ENCODE measurements at regions of chr9 and their contacts with region 1.

Region 1: DNA sequence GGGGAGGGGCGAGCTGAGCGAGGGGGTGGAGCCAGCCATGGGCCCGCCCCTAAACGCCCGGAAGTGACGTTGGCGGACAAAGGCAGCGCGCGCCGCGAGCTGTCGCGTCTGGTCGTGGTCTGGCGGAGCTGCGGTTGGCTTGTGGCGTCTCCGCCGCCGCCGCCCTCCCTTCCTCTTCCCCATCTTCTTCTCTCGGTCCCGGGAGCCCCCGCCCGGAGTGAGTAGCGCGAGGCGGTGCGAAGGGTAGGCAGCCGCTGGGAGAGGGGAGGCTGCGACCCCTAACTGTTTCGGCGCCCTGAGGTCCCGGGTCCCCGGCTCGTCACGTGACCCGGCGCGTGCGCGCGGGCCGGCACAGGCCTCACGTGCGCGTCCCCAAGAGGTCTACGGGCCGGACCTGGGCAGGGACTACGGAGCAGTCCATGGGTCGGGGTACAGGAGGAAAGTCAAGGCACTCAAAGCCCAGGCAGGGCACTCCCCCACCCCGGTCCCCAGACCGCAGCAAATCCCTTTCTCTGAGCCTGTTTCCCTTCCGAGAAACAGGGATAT is at the start of gene NTMT1:
- DNase-seq: no peak
- H3K4me3 ChIP-seq: peak within 1 kb of the TSS; percentile 92
- H3K27ac ChIP-seq: peak within 1 kb of the TSS; percentile 94
- H3K27me3 ChIP-seq: no peaks in the 10 kb centered on the region
- CTCF ChIP-seq: no peak
- polyA plus RNA-seq, gene NTMT1: 49.3 and 50.4 TPM in 2 replicates

Region 2: DNA sequence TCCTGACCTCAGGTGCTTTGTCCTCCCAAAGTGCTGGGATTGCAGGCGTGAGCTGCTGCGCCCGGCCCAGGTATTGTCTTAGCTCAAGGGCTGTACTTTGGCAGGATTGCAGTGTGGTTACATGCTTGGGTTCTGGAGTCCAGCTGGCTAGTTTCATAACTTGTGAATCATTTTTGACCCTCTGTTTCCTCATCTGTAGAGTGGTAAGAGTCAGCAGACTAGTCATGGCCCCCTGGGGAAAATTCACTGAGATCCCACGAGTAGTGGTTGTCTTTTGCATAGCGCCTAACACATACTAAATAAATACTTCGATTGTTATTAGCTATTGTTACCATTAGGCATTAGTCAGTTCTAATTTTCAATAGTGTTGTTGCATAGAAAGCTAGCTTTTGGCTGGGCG is 500.7 kb before region 1 on chr9:
- CTCF ChIA-PET with region 1: interaction called, 302 read pairs
- POLR2A ChIA-PET with region 1: interaction called, 3 read pairs
- DNase-seq: no peak
- H3K4me3 ChIP-seq: no peak overlapping the region
- H3K27ac ChIP-seq: no peak overlapping the region
- H3K27me3 ChIP-seq: no peaks in the 10 kb centered on the region
- CTCF ChIP-seq: no peak

Region 3: DNA sequence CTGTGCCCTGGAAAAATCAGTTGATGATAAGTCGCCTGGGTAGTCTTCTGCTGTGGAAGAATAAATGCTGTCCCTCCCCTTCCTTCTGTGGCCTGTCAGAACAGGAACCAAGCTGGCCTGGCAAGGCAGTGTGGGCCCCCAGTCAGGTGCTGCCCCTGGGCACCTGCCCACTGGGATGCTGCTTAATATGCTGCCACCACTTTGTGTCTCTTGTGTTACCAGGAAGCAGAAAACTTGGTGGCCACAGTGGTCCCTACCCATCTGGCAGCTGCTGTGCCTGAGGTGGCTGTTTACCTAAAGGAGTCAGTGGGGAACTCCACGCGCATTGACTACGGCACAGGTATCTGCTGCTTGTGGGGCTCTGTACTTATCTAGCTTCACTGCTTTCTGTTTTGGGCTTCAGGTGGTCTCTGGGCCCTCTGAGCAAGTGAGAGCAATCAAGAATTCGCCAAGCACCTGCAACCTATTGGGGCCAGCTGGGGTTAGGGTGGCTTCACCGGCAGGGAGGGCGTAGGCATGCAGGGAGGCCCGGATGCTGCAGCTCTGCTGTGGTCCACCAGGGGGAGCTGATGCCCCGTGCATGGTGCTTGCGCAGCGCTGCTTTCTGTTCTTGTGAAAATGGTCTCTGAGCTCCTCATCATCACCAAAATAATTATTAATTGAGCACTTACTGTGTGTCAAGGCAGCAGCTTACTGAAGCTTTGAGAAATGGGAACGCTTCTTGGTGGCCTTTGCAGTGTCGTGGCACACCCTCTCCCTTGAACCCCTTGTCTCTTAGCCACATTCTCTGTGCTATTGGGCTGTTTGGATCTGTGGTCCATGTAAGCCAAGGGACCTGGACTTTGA is 494.6 kb before region 1 on chr9:
- CTCF ChIA-PET with region 1: interaction called, 302 read pairs
- POLR2A ChIA-PET with region 1: interaction called, 3 read pairs
- DNase-seq: no peak
- H3K4me3 ChIP-seq: no peak overlapping the region
- H3K27ac ChIP-seq: peak overlapping the region; percentile 3
- H3K27me3 ChIP-seq: no peaks in the 10 kb centered on the region
- CTCF ChIP-seq: peak; percentile 99

Region 4: DNA sequence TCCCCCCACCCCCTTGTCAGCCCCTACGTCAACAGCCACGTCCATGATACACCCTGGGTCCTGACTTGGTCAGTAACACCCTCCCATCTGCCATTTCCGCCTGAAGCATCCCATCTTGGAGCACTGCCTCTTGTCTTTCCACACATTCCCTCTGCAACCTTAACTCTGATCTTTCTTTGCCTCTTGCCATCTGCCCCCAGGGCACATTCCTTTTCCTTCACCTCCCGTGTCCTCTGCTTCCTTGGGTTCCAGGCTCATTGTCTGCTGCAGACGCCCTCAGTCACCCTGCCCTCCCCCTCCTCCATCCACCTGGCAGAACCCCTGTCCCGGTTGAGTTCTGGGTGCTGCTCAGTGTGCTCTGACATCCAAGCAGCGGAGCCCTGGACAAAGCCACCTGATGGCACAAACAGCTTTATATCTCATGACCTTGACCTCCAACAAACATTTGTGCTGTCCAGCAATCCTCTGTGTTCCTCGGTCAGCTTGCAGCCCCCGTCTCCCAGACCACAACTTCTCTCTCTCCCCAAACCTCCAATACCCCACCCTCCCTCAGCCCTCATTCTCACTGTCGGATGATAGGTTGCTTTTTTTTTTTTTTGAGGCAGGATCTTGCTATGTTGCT is 350.4 kb before region 1 on chr9:
- CTCF ChIA-PET with region 1: interaction called, 10 read pairs
- POLR2A ChIA-PET with region 1: no interaction called
- DNase-seq: no peak
- H3K4me3 ChIP-seq: no peak overlapping the region
- H3K27ac ChIP-seq: no peak overlapping the region
- H3K27me3 ChIP-seq: peaks cover 2% of the 10 kb centered on the region
- CTCF ChIP-seq: no peak

Region 5: GRCh38 chr9:129752915-129753729 is 127.0 kb after region 1 on chr9 and contains the start of gene PTGES:
- CTCF ChIA-PET with region 1: interaction called, 10 read pairs
- POLR2A ChIA-PET with region 1: no interaction called
- DNase-seq: peak; percentile 68
- H3K4me3 ChIP-seq: peak within 1 kb of the TSS; percentile 68
- H3K27ac ChIP-seq: peak within 1 kb of the TSS; percentile 21
- H3K27me3 ChIP-seq: peaks cover 2% of the 10 kb centered on the region
- CTCF ChIP-seq: no peak
- polyA plus RNA-seq, gene PTGES: 17.0 and 21.4 TPM in 2 replicates